ENCODE measurements at regions of chr3 and their contacts with region 1.

Region 1: GRCh38 chr3:69665026-69665737 is 74.1 kb upstream of the MITF start:
- DNase-seq: no peak
- H3K4me3 ChIP-seq: no peak overlapping the region
- H3K27ac ChIP-seq: no peak overlapping the region
- H3K4me1 ChIP-seq: no peaks in the 10 kb centered on the region
- H3K27me3 ChIP-seq: no peaks in the 10 kb centered on the region
- CTCF ChIP-seq: no peak
- POLR2A ChIP-seq: no peak

Region 2: DNA sequence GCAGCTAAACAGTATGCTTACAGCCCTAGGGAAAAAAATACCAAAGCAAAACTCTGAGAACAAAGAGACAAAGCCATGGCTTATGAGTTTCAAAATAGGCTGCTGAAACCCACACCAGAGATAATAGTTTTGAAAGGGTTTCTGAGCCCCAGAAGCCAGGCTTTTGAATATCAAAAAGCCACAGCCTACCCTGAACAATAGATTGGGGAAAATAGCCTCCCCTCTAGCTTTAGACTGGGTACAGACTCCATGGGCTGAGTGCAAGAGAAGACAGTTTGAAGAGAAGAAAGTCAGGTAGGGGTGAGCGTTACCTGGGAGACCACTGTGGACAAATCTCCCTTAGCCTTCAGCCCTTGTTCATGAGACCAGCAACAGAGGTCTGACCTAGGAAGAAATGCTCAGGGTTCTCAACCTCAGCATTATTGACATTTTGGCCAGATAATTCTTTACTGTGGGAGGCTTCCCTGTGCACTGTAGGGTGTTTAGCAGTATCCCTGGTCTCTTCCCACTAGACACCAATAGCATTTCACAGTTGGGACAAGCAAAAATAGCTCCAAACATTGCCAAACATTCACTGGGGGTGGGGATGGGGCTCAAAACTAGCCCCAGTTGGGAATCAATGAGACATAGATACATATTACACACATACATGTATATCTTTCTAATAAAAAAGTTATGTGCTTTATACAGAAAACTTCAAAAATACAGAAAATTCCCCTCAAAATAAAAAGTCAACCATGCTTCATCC is 721.3 kb before region 1 on chr3:
- intact Hi-C with region 1: no loop called
- DNase-seq: no peak
- H3K4me3 ChIP-seq: no peak overlapping the region
- H3K27ac ChIP-seq: no peak overlapping the region
- H3K4me1 ChIP-seq: no peaks in the 10 kb centered on the region
- H3K27me3 ChIP-seq: no peaks in the 10 kb centered on the region
- CTCF ChIP-seq: no peak
- POLR2A ChIP-seq: no peak

Region 3: GRCh38 chr3:69324362-69325025 is 340.7 kb before region 1 on chr3:
- intact Hi-C with region 1: no loop called
- DNase-seq: no peak
- H3K4me3 ChIP-seq: no peak overlapping the region
- H3K27ac ChIP-seq: no peak overlapping the region
- H3K4me1 ChIP-seq: no peaks in the 10 kb centered on the region
- H3K27me3 ChIP-seq: no peaks in the 10 kb centered on the region
- CTCF ChIP-seq: peak in 1 of 4 experiments; percentile 28
- POLR2A ChIP-seq: no peak

Region 4: DNA sequence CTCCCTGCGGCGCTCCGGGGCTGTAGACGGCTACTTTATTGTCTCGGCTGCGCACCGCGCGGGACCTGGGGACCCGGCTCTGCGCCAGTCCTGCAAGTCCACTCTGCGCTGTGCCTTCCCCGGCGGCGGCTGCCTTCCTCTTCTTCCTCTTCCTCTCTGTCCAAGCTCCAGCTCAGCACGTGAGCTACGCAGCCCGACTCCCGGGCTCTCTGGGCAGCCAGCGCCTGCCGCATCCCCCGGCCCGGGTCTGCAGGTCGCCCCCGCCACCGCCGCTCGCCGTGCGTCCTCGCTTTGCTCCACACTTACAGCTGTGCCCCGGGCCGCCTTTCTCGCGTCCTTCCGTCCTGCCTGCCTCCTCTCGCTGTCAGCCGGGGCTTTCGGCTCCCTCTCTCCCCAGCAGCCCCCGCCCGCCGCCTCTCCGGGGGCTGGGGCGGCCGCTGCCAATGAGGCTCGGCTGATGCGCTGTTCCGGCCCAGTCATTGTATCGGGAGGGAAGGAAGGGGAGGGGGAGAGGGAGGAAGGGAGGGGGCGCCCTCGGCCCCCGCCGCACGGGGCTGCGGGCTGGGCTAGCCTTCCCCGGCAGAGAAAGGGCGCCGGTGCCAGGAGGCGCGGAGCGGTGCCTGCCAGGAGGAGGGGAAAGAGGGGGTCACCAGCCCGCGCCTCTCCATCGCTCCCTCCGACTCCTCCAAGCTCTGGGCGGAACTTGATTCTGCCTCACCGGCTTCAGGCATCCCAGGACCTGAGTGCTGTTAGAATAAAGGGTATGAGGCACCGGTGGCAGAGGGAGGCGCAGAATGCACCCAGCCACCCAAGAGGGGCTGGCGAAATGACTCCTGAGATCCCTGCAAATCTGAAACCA is 122.7 kb before region 1 on chr3:
- intact Hi-C with region 1: loop called (anchors 10 kb)
- DNase-seq: no peak
- H3K4me3 ChIP-seq: peak overlapping the region; percentile 46 to 47
- H3K27ac ChIP-seq: peak overlapping the region; percentile 41 to 53
- H3K4me1 ChIP-seq: no peaks in the 10 kb centered on the region
- H3K27me3 ChIP-seq: peaks cover 2% of the 10 kb centered on the region
- CTCF ChIP-seq: no peak
- POLR2A ChIP-seq: no peak